ENCODE measurements at regions of chr7 and their contacts with region 1.

Region 1: DNA sequence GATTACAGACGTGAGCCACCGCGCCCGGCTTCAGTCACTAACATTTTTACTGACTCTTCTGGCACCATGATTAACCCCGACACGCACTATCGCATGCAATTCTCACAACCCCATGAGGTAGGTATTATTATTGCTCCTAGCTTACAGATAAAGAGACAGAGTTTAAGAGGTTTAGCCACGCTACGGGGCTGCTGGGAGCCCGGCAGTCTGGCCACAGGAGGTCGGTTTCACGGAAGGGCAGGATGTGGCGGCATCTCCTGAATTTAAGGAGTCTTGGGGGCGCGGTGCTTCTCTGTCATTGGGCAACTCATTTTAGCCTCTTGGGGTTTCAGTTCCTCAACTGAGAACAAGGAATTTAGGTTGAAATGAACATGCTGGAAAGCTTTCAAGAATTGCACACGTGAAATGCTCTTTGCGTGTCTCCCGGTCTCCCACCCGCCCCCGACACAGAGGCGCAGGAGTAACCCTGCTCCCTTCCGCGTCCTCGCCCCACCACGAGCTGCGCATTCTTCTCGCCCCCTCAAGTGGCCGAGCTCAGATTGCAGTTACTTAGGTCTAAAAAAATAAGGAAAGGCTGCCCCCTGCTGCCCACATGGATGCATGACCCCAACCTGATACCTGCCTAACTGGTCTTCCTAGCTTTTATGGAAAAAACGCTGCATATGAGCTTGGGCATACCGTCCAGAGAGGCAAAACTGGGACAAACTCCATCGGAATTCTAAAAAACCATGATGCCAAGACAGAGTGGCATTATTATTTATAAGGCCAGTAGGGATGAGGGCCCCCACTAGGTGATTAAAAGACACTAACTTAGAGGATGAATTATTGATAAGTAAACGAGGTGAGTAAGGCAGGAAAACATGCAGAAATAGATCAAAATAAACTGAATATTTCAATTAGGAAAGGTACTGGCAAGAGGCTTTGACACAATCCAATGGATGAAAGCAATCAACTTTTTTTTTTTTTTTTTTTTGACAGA is 12.4 kb downstream of the PRSS2 start:
- DNase-seq: peak; percentile 88 to 89
- H3K4me3 ChIP-seq: peak overlapping the region in 2 of 4 experiments; percentile 19 to 50; a peak in 5 of 8 replicates
- H3K27ac ChIP-seq: no peak overlapping the region
- H3K4me1 ChIP-seq: no peaks in the 10 kb centered on the region; a peak in 1 of 7 replicates
- H3K27me3 ChIP-seq: no peaks in the 10 kb centered on the region
- CTCF ChIP-seq: peak; percentile 81 to 100 (median 97)
- EP300 ChIP-seq: no peak; a peak in 1 of 3 replicates
- POLR2A ChIP-seq: no peak
- RAD21 ChIP-seq: peak; percentile 99 to 100

Region 2: GRCh38 chr7:142535123-142535779 is 248.0 kb before region 1 on chr7:
- CTCF ChIA-PET with region 1: interaction called, 29 read pairs
- POLR2A ChIA-PET with region 1: interaction called, 3 read pairs
- DNase-seq: peak in 1 of 2 experiments; percentile 85
- H3K4me3 ChIP-seq: no peak overlapping the region
- H3K27ac ChIP-seq: no peak overlapping the region
- H3K4me1 ChIP-seq: peaks cover 0 to 2% (median 0%) of the 10 kb centered on the region in 4 experiments; a peak in 1 of 7 replicates
- H3K27me3 ChIP-seq: no peaks in the 10 kb centered on the region; a peak in 1 of 7 replicates
- CTCF ChIP-seq: peak; percentile 76 to 95 (median 91)
- EP300 ChIP-seq: no peak
- POLR2A ChIP-seq: no peak
- RAD21 ChIP-seq: peak; percentile 94

Region 3: DNA sequence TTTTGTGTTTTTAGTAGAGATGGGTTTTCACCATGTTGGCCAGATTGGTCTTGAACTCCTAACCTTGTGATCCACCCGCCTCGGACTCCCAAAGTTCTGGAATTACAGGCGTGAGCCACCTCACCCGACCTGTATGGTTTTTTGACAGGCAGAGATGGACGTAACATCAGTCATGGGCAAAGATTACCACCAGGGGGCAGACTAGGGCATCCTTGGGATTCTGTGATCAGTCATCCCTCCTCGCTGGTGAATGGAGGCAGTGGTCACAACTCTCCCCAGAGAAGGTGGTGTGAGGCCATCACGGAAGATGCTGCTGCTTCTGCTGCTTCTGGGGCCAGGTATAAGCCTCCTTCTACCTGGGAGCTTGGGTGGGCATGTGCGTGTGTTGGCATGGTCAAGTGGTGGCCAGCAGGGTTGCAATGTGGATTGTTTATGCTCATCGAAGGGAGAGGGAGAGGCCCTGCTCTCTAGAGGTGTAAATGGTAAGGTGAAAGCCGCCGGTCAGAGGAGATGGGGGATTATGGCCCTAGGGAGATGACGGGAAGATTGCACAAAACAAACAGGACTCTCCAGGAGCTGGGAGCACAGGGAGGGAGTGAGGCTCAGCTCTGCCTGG is 156.7 kb before region 1 on chr7:
- CTCF ChIA-PET with region 1: interaction called, 381 read pairs
- POLR2A ChIA-PET with region 1: interaction called, 3 read pairs
- DNase-seq: peak in 1 of 2 experiments; percentile 94
- H3K4me3 ChIP-seq: no peak overlapping the region
- H3K27ac ChIP-seq: no peak overlapping the region
- H3K4me1 ChIP-seq: peaks cover 0 to 3% (median 0%) of the 10 kb centered on the region in 4 experiments; a peak in 1 of 7 replicates
- H3K27me3 ChIP-seq: no peaks in the 10 kb centered on the region; a peak in 1 of 7 replicates
- CTCF ChIP-seq: peak; percentile 60 to 85 (median 79)
- EP300 ChIP-seq: no peak
- POLR2A ChIP-seq: no peak
- RAD21 ChIP-seq: peak; percentile 55 to 62

Region 4: DNA sequence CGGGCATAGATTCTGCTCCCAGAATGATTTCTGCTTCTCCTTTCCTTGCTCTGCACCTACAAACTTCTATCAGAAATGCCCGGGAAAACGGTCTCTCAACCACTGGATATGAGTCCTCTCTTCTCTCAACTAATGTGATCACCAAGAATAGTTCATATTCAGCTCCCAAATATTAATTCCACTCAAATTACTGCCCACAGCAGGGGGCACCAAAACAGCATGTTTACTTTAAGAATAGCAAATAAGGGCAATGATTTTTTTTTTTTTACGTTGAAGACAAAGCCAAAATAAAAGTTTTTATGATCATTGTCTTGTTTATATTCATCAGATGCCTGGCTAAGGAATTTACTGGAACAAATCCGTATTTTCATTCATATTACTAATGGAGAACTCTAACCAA is 128.8 kb before region 1 on chr7:
- CTCF ChIA-PET with region 1: interaction called, 36 read pairs
- POLR2A ChIA-PET with region 1: interaction called, 4 read pairs
- DNase-seq: no peak
- H3K4me3 ChIP-seq: no peak overlapping the region
- H3K27ac ChIP-seq: no peak overlapping the region
- H3K4me1 ChIP-seq: no peaks in the 10 kb centered on the region
- H3K27me3 ChIP-seq: no peaks in the 10 kb centered on the region
- CTCF ChIP-seq: no peak
- EP300 ChIP-seq: no peak
- POLR2A ChIP-seq: no peak
- RAD21 ChIP-seq: no peak

Region 5: DNA sequence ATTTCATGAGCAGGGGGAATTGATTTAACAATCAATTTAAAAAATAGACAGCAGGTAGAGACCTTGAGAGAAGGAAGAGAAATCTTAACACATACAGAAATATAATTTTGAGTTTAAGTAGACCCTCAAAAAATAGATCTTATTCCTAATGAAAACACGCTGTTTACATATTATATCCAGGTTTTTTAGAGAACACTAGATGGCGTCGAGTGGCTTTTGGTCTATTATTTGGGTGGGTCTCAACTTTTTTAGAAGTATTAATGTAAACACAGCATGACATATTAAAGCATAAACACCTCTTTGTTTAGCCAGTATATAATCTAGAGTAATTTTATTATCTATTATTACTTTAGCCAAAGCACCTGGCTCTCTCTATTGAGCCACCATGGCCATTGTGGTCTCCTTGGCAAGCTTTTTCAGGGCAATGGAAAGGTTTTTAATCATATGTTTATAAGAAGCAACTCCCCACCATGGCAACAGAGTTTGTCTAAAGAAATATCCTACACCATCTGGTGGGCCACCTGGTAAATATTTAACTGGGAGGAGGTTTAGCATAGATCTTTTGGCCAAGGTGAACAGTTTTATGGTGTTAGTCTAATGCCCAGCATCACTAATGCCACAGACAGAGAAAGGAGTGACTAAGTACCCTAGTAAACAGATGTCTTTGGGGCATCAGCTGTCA is 93.6 kb before region 1 on chr7:
- CTCF ChIA-PET with region 1: interaction called, 31 read pairs
- POLR2A ChIA-PET with region 1: no interaction called
- DNase-seq: no peak
- H3K4me3 ChIP-seq: no peak overlapping the region
- H3K27ac ChIP-seq: no peak overlapping the region
- H3K4me1 ChIP-seq: no peaks in the 10 kb centered on the region
- H3K27me3 ChIP-seq: no peaks in the 10 kb centered on the region
- CTCF ChIP-seq: peak in 2 of 3 experiments; percentile 10 to 29; a peak in 2 of 4 replicates
- EP300 ChIP-seq: no peak
- POLR2A ChIP-seq: no peak
- RAD21 ChIP-seq: peak; percentile 38 to 42

Region 6: GRCh38 chr7:142771353-142771723 is 11.9 kb before region 1 on chr7:
- CTCF ChIA-PET with region 1: interaction called, 73 read pairs
- POLR2A ChIA-PET with region 1: no interaction called
- DNase-seq: no peak
- H3K4me3 ChIP-seq: no peak overlapping the region
- H3K27ac ChIP-seq: no peak overlapping the region
- H3K4me1 ChIP-seq: no peaks in the 10 kb centered on the region
- H3K27me3 ChIP-seq: no peaks in the 10 kb centered on the region
- CTCF ChIP-seq: no peak
- EP300 ChIP-seq: no peak
- POLR2A ChIP-seq: no peak
- RAD21 ChIP-seq: no peak

Region 7: GRCh38 chr7:142866361-142867058 is 83.3 kb after region 1 on chr7:
- CTCF ChIA-PET with region 1: interaction called, 13 read pairs
- POLR2A ChIA-PET with region 1: no interaction called
- DNase-seq: peak in 1 of 2 experiments; percentile 82
- H3K4me3 ChIP-seq: no peak overlapping the region
- H3K27ac ChIP-seq: no peak overlapping the region
- H3K4me1 ChIP-seq: peaks cover 3 to 10% (median 9%) of the 10 kb centered on the region in 4 experiments; a peak in 6 of 7 replicates
- H3K27me3 ChIP-seq: no peaks in the 10 kb centered on the region
- CTCF ChIP-seq: peak; percentile 79 to 84 (median 83)
- EP300 ChIP-seq: no peak
- POLR2A ChIP-seq: no peak
- RAD21 ChIP-seq: peak; percentile 67 to 77

Measured in H1 (cell line).